ENCODE measurements at regions of chrX and their contacts with region 1.

Region 1: GRCh38 chrX:44244008-44244407 is 99.5 kb downstream of the EFHC2 start:
- DNase-seq: no peak
- ATAC-seq: no peak
- H3K4me3 ChIP-seq: no peak overlapping the region
- H3K27ac ChIP-seq: no peak overlapping the region
- H3K4me1 ChIP-seq: no peaks in the 10 kb centered on the region
- H3K27me3 ChIP-seq: peaks cover 0 to 13% (median 0%) of the 10 kb centered on the region in 3 donors
- CTCF ChIP-seq: peak; percentile 34

Region 2: DNA sequence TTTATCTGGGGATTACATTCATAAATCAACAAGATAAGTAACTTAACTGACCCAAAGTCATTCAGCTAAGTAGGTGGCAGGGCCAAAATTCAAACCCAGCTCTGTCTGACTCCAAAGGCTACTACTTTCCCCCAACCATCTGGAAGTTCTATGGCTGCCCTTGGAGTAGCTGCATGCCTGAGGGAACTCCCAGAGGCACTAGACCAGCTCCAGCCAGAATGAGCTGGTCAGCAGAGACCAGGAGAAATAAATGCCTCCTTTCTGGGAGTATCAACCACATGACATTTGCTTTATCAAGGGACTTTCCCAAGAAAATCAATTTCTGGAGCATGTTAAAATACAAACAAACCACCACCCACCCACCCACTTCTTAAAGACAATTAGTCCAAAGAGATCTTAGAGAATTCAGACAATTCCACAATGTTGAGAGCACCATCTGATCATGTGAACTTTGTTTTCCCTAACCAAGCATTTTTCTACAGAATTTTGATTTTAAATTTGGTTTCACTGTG is 81.0 kb before region 1 on chrX:
- intact Hi-C with region 1: loop called in 1 of 2 experiments (anchors 10 kb)
- DNase-seq: no peak
- ATAC-seq: no peak
- H3K4me3 ChIP-seq: no peak overlapping the region
- H3K27ac ChIP-seq: no peak overlapping the region
- H3K4me1 ChIP-seq: no peaks in the 10 kb centered on the region
- H3K27me3 ChIP-seq: peaks cover 0 to 9% (median 0%) of the 10 kb centered on the region in 3 donors
- CTCF ChIP-seq: no peak

Region 3: DNA sequence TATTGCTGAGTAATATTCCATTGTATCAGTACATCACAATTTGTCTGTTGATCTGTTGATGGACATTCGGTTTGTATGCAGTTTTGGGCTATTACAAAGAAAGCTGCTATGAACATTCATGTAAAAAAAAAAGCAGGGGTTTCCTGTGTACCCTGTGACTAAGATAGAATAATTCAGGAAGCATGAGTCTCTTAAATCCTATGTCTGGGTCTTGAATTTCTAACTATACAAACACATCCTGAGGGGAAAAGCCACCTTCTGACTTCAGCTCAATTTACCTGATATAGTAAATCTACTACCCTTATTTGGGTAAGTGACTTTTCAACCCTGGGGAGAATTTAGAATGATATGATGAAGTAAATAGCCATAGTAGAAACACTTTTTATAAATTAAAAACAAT is 393.3 kb after region 1 on chrX:
- intact Hi-C with region 1: no loop called
- DNase-seq: no peak
- ATAC-seq: no peak
- H3K4me3 ChIP-seq: no peak overlapping the region
- H3K27ac ChIP-seq: no peak overlapping the region
- H3K4me1 ChIP-seq: no peaks in the 10 kb centered on the region
- H3K27me3 ChIP-seq: no peaks in the 10 kb centered on the region
- CTCF ChIP-seq: no peak